ENCODE measurements at regions of chr7 and their contacts with region 1.

Region 1: DNA sequence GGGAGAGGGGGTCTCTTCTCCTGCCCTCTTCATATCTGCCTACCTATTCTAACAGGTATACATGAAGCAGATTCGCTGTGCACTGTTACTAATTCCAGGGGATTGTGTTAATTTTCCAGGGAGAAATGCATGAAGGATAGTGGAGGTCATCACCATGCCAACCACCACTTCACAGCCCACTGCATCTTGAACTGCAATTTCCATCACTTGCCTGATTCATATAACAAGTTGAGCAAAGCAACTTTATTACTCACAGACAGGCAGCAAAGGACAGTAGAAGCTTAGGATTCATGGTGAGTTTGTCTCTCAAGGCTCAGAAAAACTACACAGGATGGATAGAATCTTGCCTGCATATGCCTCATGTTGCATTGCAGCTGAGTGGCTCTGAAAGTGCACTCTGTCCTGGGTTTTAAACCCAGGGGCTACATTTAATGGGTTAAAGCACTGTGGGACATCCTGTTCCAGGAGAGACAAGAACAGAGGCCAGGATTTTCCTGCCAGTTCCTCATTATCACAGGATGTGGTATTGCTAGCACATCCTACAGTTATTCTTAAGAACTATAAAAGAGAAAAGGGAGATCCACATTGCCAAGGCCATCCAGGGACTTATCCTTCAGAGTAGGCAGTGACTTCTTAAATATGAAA is 136.9 kb upstream of the PRSS1 start:
- H3K4me3 ChIP-seq: no peak overlapping the region
- H3K27ac ChIP-seq: no peak overlapping the region
- H3K4me1 ChIP-seq: no peaks in the 10 kb centered on the region
- CTCF ChIP-seq: no peak

Region 2: GRCh38 chr7:142626420-142627035 is 14.2 kb after region 1 on chr7:
- CTCF ChIA-PET with region 1: interaction called, 22 read pairs
- POLR2A ChIA-PET with region 1: no interaction called
- H3K4me3 ChIP-seq: no peak overlapping the region
- H3K27ac ChIP-seq: no peak overlapping the region
- H3K4me1 ChIP-seq: no peaks in the 10 kb centered on the region
- CTCF ChIP-seq: no peak